ENCODE measurements at regions of chr3 and their contacts with region 1.

Region 1: DNA sequence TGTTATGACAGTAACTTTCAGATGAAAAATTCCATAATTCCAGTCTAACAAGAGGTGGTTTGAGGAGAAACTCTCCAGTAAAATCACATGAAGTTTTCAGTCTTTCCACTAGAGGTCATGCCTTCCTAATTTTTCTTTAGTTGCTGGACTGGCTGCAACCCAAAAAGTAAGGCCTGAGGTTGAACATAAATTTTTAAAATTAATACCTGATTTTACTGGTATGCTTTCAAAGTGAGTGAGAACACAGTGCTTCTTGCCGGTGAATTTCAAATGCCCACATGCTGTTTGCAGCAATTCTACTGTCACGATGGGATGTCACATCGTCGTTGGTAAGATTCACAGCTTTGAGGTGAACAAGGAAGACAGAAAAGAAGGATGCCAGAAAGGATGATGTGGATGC is 89.0 kb upstream of the FGF12 start:
- H3K4me3 Mint-ChIP-seq: no peak overlapping the region
- H3K27ac Mint-ChIP-seq: no peak overlapping the region
- H3K4me1 Mint-ChIP-seq: peaks cover 34% of the 10 kb centered on the region
- H3K27me3 Mint-ChIP-seq: peaks cover 6% of the 10 kb centered on the region

Region 2: DNA sequence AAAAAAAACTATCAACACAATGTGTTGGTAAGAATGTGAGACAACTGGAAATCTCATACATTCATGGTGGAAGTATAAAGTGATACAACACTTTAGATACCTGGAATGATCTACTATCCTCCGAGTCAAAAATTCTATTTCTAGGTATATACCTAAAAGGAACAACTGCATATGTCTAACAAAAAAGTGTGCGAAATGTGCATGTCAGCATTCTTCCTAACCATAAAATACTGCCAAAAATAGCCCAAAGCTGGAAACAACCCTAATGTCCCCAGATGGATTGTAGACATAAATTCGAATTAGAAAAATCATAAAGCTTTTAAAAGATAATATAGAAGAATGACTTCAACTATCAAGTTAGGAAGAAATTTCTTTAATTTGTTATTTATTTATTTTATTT is 37.8 kb before region 1 on chr3:
- intact Hi-C with region 1: no loop called
- H3K4me3 Mint-ChIP-seq: no peak overlapping the region
- H3K27ac Mint-ChIP-seq: no peak overlapping the region
- H3K4me1 Mint-ChIP-seq: no peaks in the 10 kb centered on the region
- H3K27me3 Mint-ChIP-seq: no peaks in the 10 kb centered on the region

Region 3: GRCh38 chr3:192864941-192865340 is 48.6 kb after region 1 on chr3:
- intact Hi-C with region 1: no loop called
- H3K4me3 Mint-ChIP-seq: no peak overlapping the region
- H3K27ac Mint-ChIP-seq: no peak overlapping the region
- H3K4me1 Mint-ChIP-seq: peaks cover 33% of the 10 kb centered on the region
- H3K27me3 Mint-ChIP-seq: peaks cover 2% of the 10 kb centered on the region

Region 4: GRCh38 chr3:193040836-193041672 is 224.7 kb after region 1 on chr3:
- intact Hi-C with region 1: loop called (anchors 1 kb)
- H3K4me3 Mint-ChIP-seq: no peak overlapping the region
- H3K27ac Mint-ChIP-seq: no peak overlapping the region
- H3K4me1 Mint-ChIP-seq: no peaks in the 10 kb centered on the region
- H3K27me3 Mint-ChIP-seq: no peaks in the 10 kb centered on the region

Region 5: DNA sequence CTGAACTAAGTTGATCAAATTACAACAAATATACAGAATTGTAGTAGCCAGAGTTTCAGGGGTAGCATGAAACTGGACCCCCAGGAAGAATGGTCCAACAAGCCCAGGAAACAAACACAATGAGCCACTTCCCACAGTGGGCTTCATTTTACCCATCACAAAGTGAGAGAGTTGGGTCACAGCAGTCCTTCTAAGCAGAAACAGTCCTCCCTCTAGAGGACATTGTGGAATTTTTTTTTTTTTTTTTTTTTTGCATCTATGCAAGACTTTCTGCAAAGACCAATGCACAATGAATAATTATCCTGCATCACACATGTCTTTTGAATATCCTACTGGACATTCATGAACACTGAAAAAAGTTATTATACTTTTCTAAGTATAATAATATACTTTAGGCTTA is 636.0 kb after region 1 on chr3:
- intact Hi-C with region 1: loop called (anchors 10 kb)
- H3K4me3 Mint-ChIP-seq: no peak overlapping the region
- H3K27ac Mint-ChIP-seq: no peak overlapping the region
- H3K4me1 Mint-ChIP-seq: peaks cover 30% of the 10 kb centered on the region
- H3K27me3 Mint-ChIP-seq: peaks cover 1% of the 10 kb centered on the region

Measured in dendritic cell treated with granulocyte-macrophage colony-stimulating factor and Interleukin-4, amounts not matched to agents 40 ng/mL and 50 ng/mL, for 4 days (primary cell).